Activated CD4-positive, alpha-beta memory T cell treated with anti-CD3 and anti-CD28 coated beads, Interleukin-2, amount 10 ng/mL, durations not matched to agents 7 days and 5 days (primary cell): ENCODE measurements at regions of chr6 and their contacts with region 1.

Region 1: DNA sequence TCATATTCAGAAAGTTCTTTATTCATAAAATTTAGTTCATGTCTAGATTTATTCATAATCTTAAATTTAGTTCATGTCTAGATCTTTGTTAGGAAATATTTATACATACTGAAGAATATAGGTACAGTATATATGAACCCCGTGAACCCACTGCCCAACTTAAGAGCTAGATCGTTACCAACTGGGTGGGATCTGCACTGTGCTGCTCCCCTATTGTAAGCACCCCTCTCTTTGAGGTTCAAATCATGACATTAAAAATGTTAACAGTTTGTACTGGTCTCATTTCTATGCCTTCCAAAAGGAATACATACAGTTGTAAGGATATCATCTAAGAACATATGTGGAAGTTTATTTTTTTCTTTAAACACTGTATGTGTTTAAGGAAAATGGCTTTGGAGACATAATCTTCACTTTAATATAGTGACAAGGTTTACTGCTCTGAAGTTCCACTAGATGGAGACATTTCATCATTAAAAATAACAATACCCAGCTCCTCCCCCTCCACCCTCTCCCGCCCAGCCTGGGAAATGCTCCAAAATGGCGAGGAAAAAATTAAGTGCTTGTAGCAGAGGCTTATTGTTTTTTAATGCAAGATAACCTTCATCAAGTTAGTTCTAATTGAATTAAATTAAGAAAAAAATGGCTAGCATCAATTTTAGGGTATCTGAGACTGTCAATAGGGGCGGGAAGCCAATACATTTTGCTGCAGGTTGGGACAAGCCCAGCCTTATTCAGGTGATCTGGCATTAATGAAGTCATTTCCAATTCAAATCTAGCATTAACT is 104.1 kb upstream of the TRAF3IP2 start:
- DNase-seq: peak; percentile 61
- H3K4me3 Mint-ChIP-seq: peak overlapping the region; percentile 8
- H3K27ac Mint-ChIP-seq: peak overlapping the region; percentile 59
- H3K4me1 Mint-ChIP-seq: peaks cover 51% of the 10 kb centered on the region
- H3K27me3 Mint-ChIP-seq: no peaks in the 10 kb centered on the region

Region 2: DNA sequence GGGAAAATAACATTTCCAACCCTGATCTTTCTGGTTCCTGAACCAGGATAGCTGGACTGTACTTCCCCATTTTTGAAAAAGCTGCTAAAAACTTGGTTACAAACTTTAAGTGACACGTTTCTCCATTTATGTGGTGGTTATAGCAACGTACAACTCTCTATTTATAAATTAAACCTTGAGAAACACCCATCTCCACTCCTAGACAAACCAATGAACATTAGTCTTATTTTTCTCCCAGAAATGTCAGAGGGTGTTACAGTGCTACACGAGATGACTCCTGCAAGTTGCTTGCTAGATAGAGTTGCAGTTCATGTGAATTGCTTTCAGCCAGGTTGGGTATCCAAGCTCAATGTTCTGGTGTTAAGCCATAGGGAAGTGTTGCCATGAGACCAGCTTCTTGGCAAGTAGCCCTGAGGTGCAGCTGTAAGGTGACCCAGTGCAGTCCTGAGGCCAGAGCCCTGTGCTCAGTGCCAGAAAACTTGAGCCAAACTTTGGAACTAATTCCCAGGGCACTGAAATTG is 175.5 kb before region 1 on chr6:
- CTCF ChIA-PET with region 1: no interaction called
- POLR2A ChIA-PET with region 1: no interaction called
- DNase-seq: no peak
- H3K4me3 Mint-ChIP-seq: no peak overlapping the region
- H3K27ac Mint-ChIP-seq: no peak overlapping the region
- H3K4me1 Mint-ChIP-seq: peaks cover 36% of the 10 kb centered on the region
- H3K27me3 Mint-ChIP-seq: no peaks in the 10 kb centered on the region

Region 3: DNA sequence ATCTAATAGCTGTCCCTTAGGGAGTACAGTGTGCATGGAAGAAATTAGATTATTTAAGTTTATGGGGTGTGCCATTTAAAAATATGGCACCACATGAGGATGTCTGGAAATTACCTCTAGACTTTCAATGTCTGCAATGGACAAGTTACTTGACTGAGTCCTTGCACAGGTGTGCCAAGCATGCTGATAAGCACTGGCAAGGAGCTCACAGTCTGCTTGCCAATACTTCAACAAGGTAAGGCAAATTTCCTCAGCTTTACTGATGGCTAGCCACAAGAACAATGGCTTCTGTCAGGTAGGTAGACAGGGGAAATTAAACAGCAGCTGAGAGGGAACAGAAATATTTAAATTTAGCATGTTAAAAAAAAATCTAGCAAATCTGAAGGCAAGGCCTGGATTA is 13.0 kb before region 1 on chr6:
- CTCF ChIA-PET with region 1: interaction called, 11 read pairs
- POLR2A ChIA-PET with region 1: no interaction called
- DNase-seq: no peak
- H3K4me3 Mint-ChIP-seq: no peak overlapping the region
- H3K27ac Mint-ChIP-seq: no peak overlapping the region
- H3K4me1 Mint-ChIP-seq: peaks cover 24% of the 10 kb centered on the region
- H3K27me3 Mint-ChIP-seq: no peaks in the 10 kb centered on the region

Region 4: DNA sequence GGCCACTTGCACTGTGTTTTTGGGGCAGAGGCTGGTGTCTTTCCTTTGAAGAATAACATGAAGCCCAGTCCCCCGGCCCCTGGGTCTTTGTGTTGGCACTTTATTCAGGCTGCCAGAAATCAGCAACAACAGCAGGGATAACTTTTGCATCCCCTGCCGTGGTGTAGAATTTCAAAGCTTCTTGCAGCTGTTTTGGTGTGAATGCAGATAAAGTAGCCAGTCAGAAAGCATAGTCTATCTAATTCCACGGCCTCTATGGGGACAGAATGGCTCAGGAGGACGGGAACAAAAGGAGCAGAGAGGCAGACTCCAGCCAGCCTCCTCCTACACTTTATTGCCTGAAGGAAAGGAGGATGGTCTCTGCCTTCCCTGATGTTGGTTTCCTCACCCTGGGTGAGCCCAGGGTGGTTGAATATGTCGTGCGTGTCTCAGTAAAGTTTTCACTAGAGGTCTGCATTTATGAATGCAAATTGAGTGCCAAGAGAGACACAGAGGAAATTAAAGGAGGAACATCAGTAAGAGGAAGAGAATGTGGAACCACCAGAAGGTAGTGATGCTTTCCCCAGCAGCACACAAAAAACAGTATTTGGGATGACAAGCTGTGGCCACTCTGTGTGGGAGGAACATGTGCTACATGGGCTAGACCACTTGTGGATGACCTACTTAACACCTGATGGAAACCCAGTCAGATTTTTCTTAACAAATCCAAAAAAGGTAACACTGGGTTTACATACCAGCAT is 21.8 kb after region 1 on chr6:
- CTCF ChIA-PET with region 1: no interaction called
- POLR2A ChIA-PET with region 1: no interaction called
- DNase-seq: no peak
- H3K4me3 Mint-ChIP-seq: no peak overlapping the region
- H3K27ac Mint-ChIP-seq: no peak overlapping the region
- H3K4me1 Mint-ChIP-seq: peaks cover 51% of the 10 kb centered on the region
- H3K27me3 Mint-ChIP-seq: no peaks in the 10 kb centered on the region

Region 5: DNA sequence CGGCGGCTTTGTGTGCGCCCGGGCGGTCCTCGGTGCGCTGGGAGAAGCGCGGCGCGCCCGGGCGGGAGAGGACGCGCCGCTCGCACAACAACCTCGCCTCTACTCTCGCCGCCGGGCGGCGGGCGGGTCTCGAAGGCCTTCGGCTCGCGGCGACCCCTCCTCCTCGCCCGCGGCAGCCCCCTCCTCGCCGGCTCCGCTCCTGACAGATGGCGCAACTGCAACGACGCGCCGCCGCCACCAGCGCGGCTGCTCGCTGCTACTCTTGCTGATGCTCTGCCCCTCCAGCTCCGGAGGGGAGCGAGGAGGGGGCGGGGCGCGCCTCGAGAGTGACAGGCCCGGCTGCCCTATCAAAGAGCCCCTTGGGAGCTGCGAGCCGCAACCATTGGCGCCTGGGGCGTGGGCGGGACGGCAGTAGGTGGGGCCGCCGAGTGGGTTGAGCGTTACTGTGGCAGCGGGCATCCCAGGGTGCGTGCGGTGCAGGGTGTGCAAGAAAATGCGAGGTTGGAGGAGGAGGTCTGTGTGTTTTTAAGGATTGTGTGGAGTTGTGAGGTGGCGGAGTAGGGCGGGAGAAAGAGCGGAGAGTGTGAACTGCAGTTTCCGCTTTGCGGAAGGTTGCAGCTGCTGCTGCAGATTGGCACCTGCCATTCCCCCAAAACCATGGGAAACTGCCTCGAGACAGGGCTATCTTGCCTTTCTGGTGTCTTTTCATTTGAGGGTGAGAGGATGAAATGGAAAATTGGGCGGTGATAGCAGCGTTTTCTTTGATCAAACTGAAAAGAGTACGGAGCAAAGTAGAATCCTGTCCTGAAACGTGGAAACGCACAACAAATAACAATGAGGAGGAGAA is 163.6 kb after region 1 on chr6 and contains the start of gene FYN:
- CTCF ChIA-PET with region 1: interaction called, 16 read pairs
- POLR2A ChIA-PET with region 1: interaction called, 5 read pairs
- DNase-seq: peak; percentile 99
- H3K4me3 Mint-ChIP-seq: peak within 1 kb of the TSS; percentile 96
- H3K27ac Mint-ChIP-seq: peak within 1 kb of the TSS; percentile 93
- H3K4me1 Mint-ChIP-seq: peaks cover 41% of the 10 kb centered on the region
- H3K27me3 Mint-ChIP-seq: no peaks in the 10 kb centered on the region
- total RNA-seq, gene FYN: 201 to 208 TPM

Region 6: GRCh38 chr6:111997078-111997852 is 287.5 kb after region 1 on chr6:
- CTCF ChIA-PET with region 1: interaction called, 23 read pairs
- POLR2A ChIA-PET with region 1: interaction called, 5 read pairs
- DNase-seq: peak; percentile 82
- H3K4me3 Mint-ChIP-seq: no peak overlapping the region
- H3K27ac Mint-ChIP-seq: no peak overlapping the region
- H3K4me1 Mint-ChIP-seq: peaks cover 40% of the 10 kb centered on the region
- H3K27me3 Mint-ChIP-seq: no peaks in the 10 kb centered on the region

Region 7: DNA sequence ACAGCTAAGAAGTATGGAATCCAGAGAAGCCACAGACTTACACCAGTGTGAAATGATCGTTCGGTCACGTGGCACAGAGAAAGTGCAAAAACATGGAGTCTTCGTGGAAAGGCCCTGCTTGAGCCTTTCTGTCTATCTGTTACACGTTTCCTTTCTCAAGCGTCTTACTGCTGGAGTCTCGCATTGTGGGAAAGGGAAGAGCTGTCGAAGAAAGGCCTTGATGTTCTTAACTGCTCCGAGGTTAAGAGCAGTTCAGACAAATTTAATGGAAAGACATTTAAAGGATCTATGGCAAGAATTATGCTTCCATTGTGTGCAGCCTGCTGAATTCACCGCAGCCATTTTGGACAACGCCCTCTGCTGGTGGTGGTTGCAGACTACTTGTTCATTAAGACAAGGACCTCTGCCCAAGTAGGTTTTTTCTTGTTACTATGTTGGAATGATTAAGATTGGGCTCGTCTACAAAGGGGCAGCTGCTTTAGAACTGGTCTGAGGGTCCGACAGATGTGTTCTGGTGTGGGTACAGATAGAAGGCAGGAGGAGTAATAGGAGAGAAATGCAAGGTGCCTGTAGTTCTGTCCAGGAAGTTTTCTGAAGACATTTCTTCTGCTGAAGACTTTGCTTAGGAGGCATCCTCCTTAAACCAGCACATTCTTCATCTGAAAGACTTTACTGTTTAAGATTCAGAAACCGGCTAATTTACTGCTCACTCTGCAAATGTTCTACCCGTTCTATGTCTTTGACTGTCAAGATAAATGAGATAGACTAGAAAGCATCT is 319.4 kb after region 1 on chr6:
- CTCF ChIA-PET with region 1: interaction called, 20 read pairs
- POLR2A ChIA-PET with region 1: no interaction called
- DNase-seq: peak; percentile 77
- H3K4me3 Mint-ChIP-seq: no peak overlapping the region
- H3K27ac Mint-ChIP-seq: peak overlapping the region; percentile 77
- H3K4me1 Mint-ChIP-seq: peaks cover 46% of the 10 kb centered on the region
- H3K27me3 Mint-ChIP-seq: no peaks in the 10 kb centered on the region